ENCODE measurements at regions of chr3 and their contacts with region 1.

Region 1: GRCh38 chr3:176587089-176587488 is 610.2 kb downstream of the TBL1XR1 start:
- DNase-seq: no peak
- H3K4me3 ChIP-seq: no peak overlapping the region
- H3K27ac ChIP-seq: no peak overlapping the region
- H3K4me1 ChIP-seq: no peaks in the 10 kb centered on the region
- H3K27me3 ChIP-seq: no peaks in the 10 kb centered on the region
- CTCF ChIP-seq: no peak

Region 2: DNA sequence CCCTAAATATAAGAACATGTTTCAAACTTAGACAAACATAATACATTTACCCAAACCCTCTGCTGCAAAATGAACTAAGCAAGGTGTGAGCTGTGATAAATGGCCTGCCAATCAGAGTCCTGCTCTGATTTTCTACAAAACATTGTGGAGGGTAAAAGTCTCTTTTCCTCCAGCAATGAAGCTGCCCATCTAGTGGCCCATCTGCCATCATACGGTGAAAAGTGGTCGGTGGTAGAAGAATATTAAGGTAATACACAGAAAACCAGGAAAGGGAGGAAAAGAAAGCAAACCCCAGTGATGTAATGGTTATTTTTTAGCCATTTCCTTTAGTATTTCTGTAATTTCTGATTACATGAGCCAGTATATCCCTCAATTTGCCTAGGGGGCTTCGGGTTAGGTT is 227.9 kb before region 1 on chr3:
- CTCF ChIA-PET with region 1: no interaction called
- POLR2A ChIA-PET with region 1: interaction called, 16 read pairs
- intact Hi-C with region 1: no loop called
- DNase-seq: no peak
- H3K4me3 ChIP-seq: no peak overlapping the region
- H3K27ac ChIP-seq: no peak overlapping the region
- H3K4me1 ChIP-seq: no peaks in the 10 kb centered on the region
- H3K27me3 ChIP-seq: no peaks in the 10 kb centered on the region
- CTCF ChIP-seq: peak; percentile 50; the same call in 1 of the 2 replicates

Region 3: DNA sequence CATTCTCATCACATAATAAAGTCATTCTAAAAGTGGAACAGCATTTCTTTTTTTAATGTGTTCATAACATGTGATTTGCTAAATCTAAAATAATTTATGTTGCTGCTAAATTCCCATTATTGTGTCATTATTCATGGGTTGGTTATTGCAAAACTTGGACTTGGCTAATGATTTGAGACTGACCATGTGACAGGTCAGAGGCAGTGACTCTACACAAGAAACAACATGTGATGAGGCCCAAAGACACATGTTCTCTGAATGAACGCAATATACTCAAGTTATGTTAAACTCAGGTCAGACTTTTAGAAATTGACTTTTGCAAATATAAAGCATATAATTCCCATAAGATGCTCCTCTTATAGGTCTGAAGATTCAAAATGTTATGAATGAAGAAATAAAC is 44.1 kb after region 1 on chr3:
- CTCF ChIA-PET with region 1: no interaction called
- POLR2A ChIA-PET with region 1: no interaction called
- intact Hi-C with region 1: loop called (anchors 2 kb)
- DNase-seq: no peak
- H3K4me3 ChIP-seq: no peak overlapping the region
- H3K27ac ChIP-seq: no peak overlapping the region
- H3K4me1 ChIP-seq: no peaks in the 10 kb centered on the region
- H3K27me3 ChIP-seq: no peaks in the 10 kb centered on the region
- CTCF ChIP-seq: no peak

Region 4: DNA sequence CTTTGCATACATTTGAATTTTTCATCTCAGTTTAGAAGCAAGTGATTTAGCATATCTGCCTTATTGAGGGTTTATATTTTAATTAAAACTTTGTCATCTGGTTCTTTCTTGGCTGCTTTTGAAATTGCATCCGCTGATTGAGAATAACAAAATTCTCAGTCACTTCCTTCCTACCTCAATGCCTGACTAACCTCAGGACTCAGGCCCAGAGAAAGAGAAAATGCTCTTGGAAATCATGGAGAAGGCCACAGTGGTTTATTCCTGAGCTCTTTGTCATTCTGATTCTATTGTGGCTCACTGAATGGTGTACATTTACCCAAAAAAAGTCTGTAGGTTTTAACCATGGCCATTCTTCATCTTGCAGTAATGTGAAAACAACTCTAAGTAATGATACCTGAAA is 76.3 kb after region 1 on chr3:
- CTCF ChIA-PET with region 1: no interaction called
- POLR2A ChIA-PET with region 1: no interaction called
- intact Hi-C with region 1: no loop called
- DNase-seq: no peak
- H3K4me3 ChIP-seq: no peak overlapping the region
- H3K27ac ChIP-seq: no peak overlapping the region
- H3K4me1 ChIP-seq: 0 out of 2 replicates have a peak, but pooled peaks cover 4% of the 10 kb centered on the region
- H3K27me3 ChIP-seq: no peaks in the 10 kb centered on the region
- CTCF ChIP-seq: no peak

Region 5: DNA sequence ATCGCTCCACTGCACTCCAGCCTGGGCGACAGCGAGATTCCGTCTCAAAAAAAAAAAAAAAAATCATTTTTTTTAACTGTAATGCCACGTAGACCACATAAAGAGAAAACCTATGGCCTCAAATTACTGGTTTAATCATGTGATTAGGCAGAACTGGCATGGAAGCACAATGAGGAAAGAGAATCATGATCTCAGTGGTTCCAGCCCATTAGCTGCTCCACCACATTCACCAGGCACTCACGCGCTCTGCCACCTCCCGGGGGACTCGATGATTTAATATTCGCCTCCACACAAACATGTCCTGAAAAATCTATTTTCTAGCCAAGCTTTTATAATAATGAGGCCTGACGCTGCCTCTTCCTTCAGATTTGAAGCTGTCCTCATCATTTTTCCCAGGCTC is 405.5 kb after region 1 on chr3:
- CTCF ChIA-PET with region 1: no interaction called
- POLR2A ChIA-PET with region 1: no interaction called
- intact Hi-C with region 1: no loop called
- DNase-seq: no peak
- H3K4me3 ChIP-seq: no peak overlapping the region
- H3K27ac ChIP-seq: no peak overlapping the region
- H3K4me1 ChIP-seq: no peaks in the 10 kb centered on the region
- H3K27me3 ChIP-seq: no peaks in the 10 kb centered on the region
- CTCF ChIP-seq: no peak